Psoas muscle (tissue), 8 donors: ENCODE measurements at regions of chr3 and their contacts with region 1.

Region 1: GRCh38 chr3:157148196-157148889 is 11.6 kb downstream of the CCNL1 start:
- DNase-seq: no peak
- ATAC-seq: peak in 2 of 4 donors; percentile 15 to 20
- H3K4me3 ChIP-seq: no peak overlapping the region
- H3K27ac ChIP-seq: no peak overlapping the region
- H3K4me1 ChIP-seq: peaks cover 2% of the 10 kb centered on the region
- H3K27me3 ChIP-seq: no peaks in the 10 kb centered on the region
- CTCF ChIP-seq: no peak

Region 2: DNA sequence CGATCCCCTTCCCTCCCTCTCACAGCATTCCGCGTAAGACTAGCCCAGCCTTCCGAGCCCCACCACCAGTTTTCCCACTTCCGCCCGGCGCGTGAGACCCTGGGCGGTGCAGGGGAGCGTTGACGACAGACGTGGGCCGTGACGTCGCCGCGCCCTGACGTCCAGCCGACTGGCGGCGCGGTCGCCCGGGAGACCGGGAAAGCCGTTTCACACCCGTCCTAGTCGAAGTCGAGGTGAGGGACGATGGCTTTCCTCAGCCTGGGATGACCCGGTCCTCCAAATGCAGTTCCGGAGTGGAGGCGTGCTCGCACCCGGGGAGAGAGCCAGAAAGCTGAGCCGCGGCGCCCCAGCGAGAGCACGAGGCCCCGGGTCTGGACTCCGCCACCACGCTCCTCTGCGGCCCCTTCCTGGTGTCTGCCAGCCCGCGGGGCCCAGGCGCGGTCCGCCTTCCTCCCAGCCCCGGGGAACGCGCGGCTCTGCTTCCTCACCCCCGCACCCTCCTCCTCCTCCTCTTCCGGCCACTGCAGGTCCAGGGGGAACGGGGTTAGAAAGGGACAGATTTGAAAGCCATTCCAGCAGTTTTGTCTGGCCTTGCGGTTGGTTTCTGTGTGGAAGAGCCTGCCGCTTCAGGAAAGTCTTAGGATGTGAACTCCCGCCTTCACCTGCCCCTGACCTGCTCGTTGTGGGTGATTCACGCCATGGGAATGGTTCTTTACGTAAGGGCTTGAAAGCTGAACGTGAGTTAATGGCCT is 322.0 kb before region 1 on chr3 and contains the start of gene LEKR1:
- intact Hi-C with region 1: no loop called
- DNase-seq: peak; percentile 88 to 90
- ATAC-seq: peak; percentile 91 to 97 (median 95)
- H3K4me3 ChIP-seq: peak within 1 kb of the TSS; percentile 93
- H3K27ac ChIP-seq: peak within 1 kb of the TSS; percentile 89
- H3K4me1 ChIP-seq: peaks cover 5% of the 10 kb centered on the region
- H3K27me3 ChIP-seq: no peaks in the 10 kb centered on the region
- CTCF ChIP-seq: no peak
- total RNA-seq, gene LEKR1: 0.30 to 0.79 (median 0.42) TPM in 3 of 4 donors, not detected in the other

Region 3: GRCh38 chr3:156918746-156919145 is 229.6 kb before region 1 on chr3:
- intact Hi-C with region 1: no loop called
- DNase-seq: no peak
- ATAC-seq: no peak
- H3K4me3 ChIP-seq: no peak overlapping the region
- H3K27ac ChIP-seq: no peak overlapping the region
- H3K4me1 ChIP-seq: no peaks in the 10 kb centered on the region
- H3K27me3 ChIP-seq: no peaks in the 10 kb centered on the region
- CTCF ChIP-seq: no peak

Region 4: GRCh38 chr3:157188391-157188790 is 40.0 kb after region 1 on chr3:
- intact Hi-C with region 1: loop called in 1 of 2 experiments (anchors 5 kb)
- DNase-seq: no peak
- ATAC-seq: no peak
- H3K4me3 ChIP-seq: no peak overlapping the region
- H3K27ac ChIP-seq: no peak overlapping the region
- H3K4me1 ChIP-seq: no peaks in the 10 kb centered on the region
- H3K27me3 ChIP-seq: no peaks in the 10 kb centered on the region
- CTCF ChIP-seq: no peak